ENCODE measurements at regions of chr12 and their contacts with region 1.

Region 1: GRCh38 chr12:118372541-118373495 is at the start of gene TAOK3:
- DNase-seq: peak; percentile 97
- H3K4me3 ChIP-seq: peak within 1 kb of the TSS; percentile 74 to 91
- H3K27ac ChIP-seq: peak within 1 kb of the TSS; percentile 71 to 76
- H3K4me1 ChIP-seq: peaks cover 9 to 22% of the 10 kb centered on the region in 2 experiments; a peak in 3 of 4 replicates
- H3K27me3 ChIP-seq: no peaks in the 10 kb centered on the region
- CTCF ChIP-seq: no peak
- EP300 ChIP-seq: no peak
- RAD21 ChIP-seq: no peak
- polyA plus RNA-seq, gene TAOK3: 18.1 and 20.6 TPM in 2 replicates

Region 2: DNA sequence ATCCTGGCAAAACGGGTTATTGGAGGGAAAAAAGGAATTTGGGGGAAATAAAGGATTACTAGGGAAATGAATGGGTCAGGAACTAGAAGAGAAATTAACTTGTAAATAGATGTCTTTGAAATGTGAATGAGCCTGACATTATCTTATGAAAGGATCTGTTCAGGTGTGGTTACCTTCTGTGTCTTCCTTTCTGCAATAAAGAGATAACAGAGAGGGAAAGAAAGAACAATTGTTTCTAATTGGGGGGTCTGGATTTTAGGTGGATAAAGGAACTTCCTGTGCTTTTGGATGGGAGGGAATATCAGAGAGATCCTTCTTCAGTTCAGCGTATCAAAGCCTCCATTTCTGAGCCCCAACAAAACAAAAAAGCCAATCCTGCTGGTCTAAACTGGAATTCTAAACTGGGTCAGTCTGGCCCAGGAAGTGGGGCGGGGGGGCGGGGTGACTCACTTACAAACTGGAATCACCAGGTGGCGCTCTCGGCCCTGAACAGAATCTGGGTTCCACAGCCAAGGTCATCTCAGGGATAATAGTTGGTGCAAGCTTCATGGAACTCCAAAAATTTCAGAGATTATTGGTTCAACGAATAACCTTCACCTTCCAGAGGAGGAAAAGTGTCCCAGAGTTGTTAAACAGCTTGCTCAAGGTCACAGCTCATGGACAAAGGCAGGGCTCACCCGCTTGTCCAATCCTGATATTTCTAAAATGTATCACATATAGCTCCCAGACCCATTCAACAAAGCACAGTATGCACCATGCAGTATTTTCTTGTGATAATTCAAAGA is 252.0 kb before region 1 on chr12:
- CTCF ChIA-PET with region 1: interaction called, 15 read pairs
- POLR2A ChIA-PET with region 1: interaction called, 3 read pairs
- DNase-seq: peak; percentile 86
- H3K4me3 ChIP-seq: no peak overlapping the region
- H3K27ac ChIP-seq: peak overlapping the region; percentile 31 to 47; a peak in 2 of 4 replicates
- H3K4me1 ChIP-seq: no peaks in the 10 kb centered on the region
- H3K27me3 ChIP-seq: no peaks in the 10 kb centered on the region
- CTCF ChIP-seq: peak; percentile 48
- EP300 ChIP-seq: no peak
- RAD21 ChIP-seq: peak; percentile 60

Region 3: DNA sequence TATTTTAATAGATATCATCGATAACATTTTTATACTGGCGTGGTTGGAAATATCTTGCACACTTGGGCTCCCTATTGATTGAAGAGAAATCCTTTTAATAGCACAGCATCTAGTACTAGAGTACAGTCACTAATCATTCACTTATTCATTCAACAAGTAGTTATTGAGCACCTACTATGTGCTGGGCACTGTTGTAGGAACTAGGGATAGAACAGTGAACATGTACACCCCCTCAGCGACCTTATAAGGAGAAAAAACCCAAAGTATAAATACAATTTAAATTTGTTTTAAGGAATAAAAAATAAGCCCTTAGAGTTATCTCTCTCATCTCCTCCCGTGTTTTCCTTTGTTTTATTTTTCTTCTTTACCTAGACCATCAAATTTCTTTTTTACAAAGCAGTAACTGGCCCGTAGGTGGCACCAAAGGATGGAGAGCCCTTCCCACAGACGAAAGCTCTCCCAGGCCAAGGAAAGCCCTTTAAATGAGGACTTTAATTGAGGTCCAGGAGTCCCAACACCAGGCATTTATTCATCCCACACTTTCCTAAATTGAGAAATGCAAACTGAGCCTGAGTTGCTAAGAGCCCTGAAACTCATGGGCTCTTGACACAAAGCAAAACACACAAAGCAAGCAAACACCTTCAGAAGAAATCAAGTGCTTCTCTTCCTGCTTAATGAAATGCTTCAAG is 207.9 kb before region 1 on chr12:
- CTCF ChIA-PET with region 1: interaction called, 79 read pairs
- POLR2A ChIA-PET with region 1: no interaction called
- DNase-seq: peak; percentile 56
- H3K4me3 ChIP-seq: no peak overlapping the region
- H3K27ac ChIP-seq: no peak overlapping the region
- H3K4me1 ChIP-seq: no peaks in the 10 kb centered on the region
- H3K27me3 ChIP-seq: no peaks in the 10 kb centered on the region
- CTCF ChIP-seq: peak; percentile 68
- EP300 ChIP-seq: no peak
- RAD21 ChIP-seq: peak; percentile 75

Region 4: DNA sequence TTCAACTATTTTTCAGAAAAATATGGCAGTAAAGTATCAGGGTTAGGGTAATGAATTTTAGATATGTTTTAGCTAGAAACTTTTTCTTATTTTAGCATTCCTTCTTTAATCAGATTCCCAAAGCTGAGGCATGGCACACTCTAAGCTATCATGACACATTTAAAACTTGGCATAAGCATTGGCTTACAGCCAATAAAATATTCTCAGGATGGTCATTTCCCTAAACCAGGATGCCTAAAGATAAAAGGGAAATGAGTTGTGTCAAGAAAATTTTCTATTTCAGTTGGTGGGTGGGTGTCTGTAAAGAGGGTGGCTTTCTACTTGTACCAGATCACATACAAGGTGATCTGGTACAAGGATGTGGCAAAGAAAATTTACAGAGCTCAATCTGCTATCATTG is 189.1 kb before region 1 on chr12:
- CTCF ChIA-PET with region 1: interaction called, 267 read pairs
- POLR2A ChIA-PET with region 1: interaction called, 13 read pairs
- DNase-seq: no peak
- H3K4me3 ChIP-seq: no peak overlapping the region
- H3K27ac ChIP-seq: peak overlapping the region in 1 of 2 experiments; percentile 78; a peak in 2 of 4 replicates
- H3K4me1 ChIP-seq: peaks cover 11 to 28% of the 10 kb centered on the region in 2 experiments; a peak in 3 of 4 replicates
- H3K27me3 ChIP-seq: no peaks in the 10 kb centered on the region
- CTCF ChIP-seq: no peak
- EP300 ChIP-seq: no peak
- RAD21 ChIP-seq: no peak

Region 5: GRCh38 chr12:118330421-118331018 is 42.3 kb before region 1 on chr12:
- CTCF ChIA-PET with region 1: interaction called, 13 read pairs
- POLR2A ChIA-PET with region 1: no interaction called
- DNase-seq: peak; percentile 63
- H3K4me3 ChIP-seq: no peak overlapping the region
- H3K27ac ChIP-seq: peak overlapping the region; percentile 77 to 86
- H3K4me1 ChIP-seq: peaks cover 37 to 59% of the 10 kb centered on the region in 2 experiments
- H3K27me3 ChIP-seq: no peaks in the 10 kb centered on the region
- CTCF ChIP-seq: no peak
- EP300 ChIP-seq: peak; percentile 44 to 88; a peak in 3 of 4 replicates
- RAD21 ChIP-seq: peak; percentile 34

Region 6: DNA sequence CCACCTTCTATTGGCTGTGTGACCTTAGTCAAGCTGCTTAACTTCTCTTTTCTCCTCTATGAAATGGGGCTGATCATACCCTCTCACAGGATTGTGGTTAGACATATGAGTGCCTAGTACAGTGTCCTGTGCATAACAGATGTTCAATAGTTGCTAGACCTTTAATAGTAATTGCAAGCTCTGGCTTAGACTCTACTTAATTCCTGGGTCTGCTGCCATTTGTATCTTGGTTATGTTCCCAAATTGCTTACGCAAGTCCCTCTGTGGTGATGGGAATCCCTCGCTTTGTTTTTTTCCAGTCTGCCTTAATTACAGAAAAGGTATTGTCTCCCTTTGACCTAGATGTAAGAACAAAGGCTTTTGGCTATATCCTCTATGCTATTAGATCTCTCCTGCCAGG is 18.6 kb after region 1 on chr12:
- CTCF ChIA-PET with region 1: interaction called, 94 read pairs
- POLR2A ChIA-PET with region 1: interaction called, 3 read pairs
- DNase-seq: no peak
- H3K4me3 ChIP-seq: no peak overlapping the region
- H3K27ac ChIP-seq: no peak overlapping the region
- H3K4me1 ChIP-seq: no peaks in the 10 kb centered on the region; a peak in 1 of 4 replicates
- H3K27me3 ChIP-seq: no peaks in the 10 kb centered on the region
- CTCF ChIP-seq: no peak
- EP300 ChIP-seq: no peak
- RAD21 ChIP-seq: no peak

Measured in SK-N-SH (cell line).